ENCODE measurements at regions of chr19 and their contacts with region 1.

Region 1: DNA sequence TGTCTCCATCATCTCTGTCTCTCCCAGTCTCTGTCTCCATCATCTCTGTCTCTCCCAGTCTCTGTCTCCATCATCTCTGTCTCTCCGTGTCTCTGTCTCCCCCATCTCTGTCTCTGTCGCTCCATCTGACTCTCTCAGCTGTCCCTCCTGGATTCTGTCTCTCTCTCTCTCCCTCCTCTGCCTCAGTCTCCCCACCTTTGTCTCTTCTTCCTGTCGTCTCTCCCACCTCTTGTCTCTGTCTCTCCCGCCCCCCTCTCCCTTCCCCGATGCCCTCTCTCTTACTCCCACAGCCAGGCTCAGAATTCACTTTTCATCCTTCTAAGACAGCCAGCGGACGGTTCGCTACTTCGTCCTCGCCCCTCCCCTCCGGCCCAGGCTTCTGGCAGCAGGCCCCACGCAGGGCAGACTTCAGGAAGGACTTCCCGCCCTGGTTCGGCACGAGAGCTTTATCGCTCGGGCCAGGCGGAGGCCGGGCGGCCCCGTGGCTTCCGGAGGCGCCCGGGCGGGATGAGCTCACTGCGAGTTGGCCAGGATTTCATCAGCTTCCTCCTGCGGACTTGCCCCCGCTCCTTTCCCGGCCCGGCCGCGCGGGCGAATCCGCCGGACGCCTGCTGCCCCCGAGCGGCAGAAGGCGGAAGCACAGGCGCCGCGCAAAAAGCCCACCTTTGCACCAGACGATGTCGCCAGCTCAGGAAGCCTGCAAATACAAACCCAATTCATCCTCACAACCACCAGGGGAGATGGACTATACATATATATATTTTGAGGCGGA is 12.4 kb upstream of the CCDC9 start:
- DNase-seq: peak; percentile 89
- H3K4me3 Mint-ChIP-seq: peak overlapping the region; percentile 71
- H3K27ac Mint-ChIP-seq: peak overlapping the region; percentile 92
- H3K4me1 Mint-ChIP-seq: peaks cover 27% of the 10 kb centered on the region
- H3K27me3 Mint-ChIP-seq: peaks cover 3% of the 10 kb centered on the region

Region 2: GRCh38 chr19:47035127-47036096 is 208.6 kb before region 1 on chr19:
- CTCF ChIA-PET with region 1: interaction called, 13 read pairs
- POLR2A ChIA-PET with region 1: no interaction called
- DNase-seq: peak; percentile 93
- H3K4me3 Mint-ChIP-seq: peak overlapping the region; percentile 79
- H3K27ac Mint-ChIP-seq: peak overlapping the region; percentile 74
- H3K4me1 Mint-ChIP-seq: peaks cover 19% of the 10 kb centered on the region
- H3K27me3 Mint-ChIP-seq: peaks cover 20% of the 10 kb centered on the region

Region 3: DNA sequence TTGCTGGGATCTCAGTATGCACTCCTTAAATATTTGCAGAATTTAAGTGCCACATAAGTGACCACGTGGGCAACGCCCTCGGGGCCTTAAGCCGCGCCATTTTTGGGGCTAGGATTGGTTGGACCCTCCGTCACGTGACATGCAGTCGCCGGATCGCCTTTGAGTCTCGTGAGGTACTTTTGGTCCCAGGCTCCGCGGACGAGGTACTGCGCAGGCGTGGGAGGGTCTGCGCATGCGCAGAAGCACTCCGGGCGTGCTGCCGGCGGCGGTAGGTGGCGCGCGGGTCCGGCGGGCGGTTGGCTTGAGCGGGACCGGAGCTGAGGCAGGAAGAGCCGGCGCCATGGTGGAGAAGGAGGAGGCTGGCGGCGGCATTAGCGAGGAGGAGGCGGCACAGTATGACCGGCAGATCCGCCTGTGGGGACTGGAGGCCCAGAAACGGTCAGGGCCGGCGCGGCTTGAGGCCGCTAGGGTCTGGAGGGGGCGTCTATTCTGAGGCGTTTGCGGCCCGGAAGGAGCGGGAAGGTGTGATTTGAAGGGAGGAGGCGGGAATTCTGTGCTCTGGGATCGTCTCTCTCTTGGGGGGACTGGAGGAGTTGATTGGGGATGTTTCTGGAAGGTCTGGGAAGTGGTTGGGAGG is 113.3 kb before region 1 on chr19 and contains the start of gene SAE1:
- CTCF ChIA-PET with region 1: interaction called, 15 read pairs
- POLR2A ChIA-PET with region 1: no interaction called
- DNase-seq: peak; percentile 92
- H3K4me3 Mint-ChIP-seq: peak within 1 kb of the TSS; percentile 99
- H3K27ac Mint-ChIP-seq: peak within 1 kb of the TSS; percentile 99
- H3K4me1 Mint-ChIP-seq: peaks cover 46% of the 10 kb centered on the region
- H3K27me3 Mint-ChIP-seq: no peaks in the 10 kb centered on the region
- total RNA-seq, gene SAE1: 162 to 168 TPM

Region 4: GRCh38 chr19:47157431-47158321 is 86.3 kb before region 1 on chr19:
- CTCF ChIA-PET with region 1: interaction called, 70 read pairs
- POLR2A ChIA-PET with region 1: interaction called, 3 read pairs
- DNase-seq: peak; percentile 60
- H3K4me3 Mint-ChIP-seq: peak overlapping the region; percentile 55
- H3K27ac Mint-ChIP-seq: peak overlapping the region; percentile 85
- H3K4me1 Mint-ChIP-seq: peaks cover 62% of the 10 kb centered on the region
- H3K27me3 Mint-ChIP-seq: no peaks in the 10 kb centered on the region

Region 5: GRCh38 chr19:47210689-47211316 is 33.2 kb before region 1 on chr19:
- CTCF ChIA-PET with region 1: interaction called, 210 read pairs
- POLR2A ChIA-PET with region 1: interaction called, 20 read pairs
- DNase-seq: peak; percentile 88
- H3K4me3 Mint-ChIP-seq: no peak overlapping the region
- H3K27ac Mint-ChIP-seq: peak overlapping the region; percentile 87
- H3K4me1 Mint-ChIP-seq: peaks cover 20% of the 10 kb centered on the region
- H3K27me3 Mint-ChIP-seq: no peaks in the 10 kb centered on the region

Region 6: GRCh38 chr19:47256688-47257443 is 12.9 kb after region 1 on chr19:
- CTCF ChIA-PET with region 1: interaction called, 80 read pairs
- POLR2A ChIA-PET with region 1: interaction called, 3 read pairs
- DNase-seq: peak; percentile 100
- H3K4me3 Mint-ChIP-seq: peak overlapping the region; percentile 91
- H3K27ac Mint-ChIP-seq: peak overlapping the region; percentile 97
- H3K4me1 Mint-ChIP-seq: peaks cover 37% of the 10 kb centered on the region
- H3K27me3 Mint-ChIP-seq: no peaks in the 10 kb centered on the region

Region 7: DNA sequence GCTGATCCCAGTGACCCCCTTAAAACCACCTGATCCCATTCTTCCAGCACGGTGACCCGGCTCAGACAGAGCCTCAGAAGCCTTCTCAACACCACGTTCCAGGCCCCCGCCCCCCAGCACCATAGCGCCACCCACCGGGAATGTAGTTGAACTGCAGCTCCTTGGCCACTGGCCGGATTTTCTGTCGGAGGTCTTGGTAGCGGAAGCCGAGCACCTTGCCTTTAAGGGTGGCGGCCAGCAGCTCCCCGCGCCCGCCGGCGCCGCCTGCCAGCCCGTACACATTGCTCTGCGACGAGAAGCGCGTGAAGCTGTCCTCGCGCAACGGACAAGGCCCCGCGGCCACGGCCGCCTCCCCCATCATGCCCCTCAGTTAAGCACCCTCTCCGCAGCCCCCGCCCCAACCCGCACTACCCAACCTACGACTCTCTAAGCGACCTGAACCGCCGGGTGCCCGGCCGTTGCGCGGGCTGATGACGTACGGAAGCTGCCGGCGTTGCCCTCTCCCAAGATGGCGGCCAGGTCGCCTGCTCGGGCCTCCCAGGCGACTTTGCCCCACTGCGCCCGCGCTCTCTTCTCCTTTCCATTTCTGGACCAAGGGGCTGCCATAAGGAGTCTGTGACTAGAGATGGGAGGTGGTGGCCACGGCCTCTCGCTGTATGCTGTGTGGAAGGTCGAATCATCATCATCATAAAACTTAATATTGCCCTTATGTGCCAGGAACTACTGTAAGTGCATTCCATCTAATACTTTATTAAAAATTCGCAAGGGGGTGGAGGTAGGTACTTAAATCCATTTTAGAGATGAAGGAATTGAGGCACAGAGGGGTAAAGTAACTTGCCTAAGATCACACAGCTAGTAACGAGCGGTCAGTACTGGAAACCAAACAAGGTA is 240.1 kb after region 1 on chr19 and contains the start of gene KPTN:
- CTCF ChIA-PET with region 1: no interaction called
- POLR2A ChIA-PET with region 1: no interaction called
- DNase-seq: peak; percentile 89
- H3K4me3 Mint-ChIP-seq: peak within 1 kb of the TSS; percentile 98
- H3K27ac Mint-ChIP-seq: peak within 1 kb of the TSS; percentile 97
- H3K4me1 Mint-ChIP-seq: peaks cover 46% of the 10 kb centered on the region
- H3K27me3 Mint-ChIP-seq: no peaks in the 10 kb centered on the region
- total RNA-seq, gene KPTN: 12.5 to 14.1 TPM

Measured in activated CD4-positive, alpha-beta T cell treated with anti-CD3 and anti-CD28 coated beads, Interleukin-2, amount 10 ng/mL, durations not matched to agents 7 days and 5 days (primary cell).